ENCODE measurements at regions of chr19 and their contacts with region 1.

Region 1: DNA sequence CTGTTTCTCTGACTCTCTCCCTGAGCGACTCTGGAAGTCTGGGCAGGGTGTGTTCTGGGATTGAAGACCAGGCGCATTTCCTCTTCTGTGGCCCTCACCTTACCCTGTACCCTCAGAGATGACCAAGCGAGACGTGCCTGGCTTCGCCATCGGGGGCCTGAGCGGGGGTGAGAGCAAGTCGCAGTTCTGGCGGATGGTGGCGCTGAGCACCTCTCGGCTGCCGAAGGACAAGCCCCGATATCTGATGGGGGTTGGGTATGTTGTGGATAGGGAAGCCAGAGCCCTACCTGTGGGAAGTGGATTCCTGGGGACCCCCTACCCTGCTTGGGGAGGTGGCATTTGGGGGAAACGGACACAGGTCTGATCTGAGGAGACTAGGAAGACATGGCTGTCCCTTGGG is 5.8 kb upstream of the DNM2 start:
- DNase-seq: no peak
- H3K4me3 ChIP-seq: no peak overlapping the region
- CTCF ChIP-seq: no peak

Region 2: DNA sequence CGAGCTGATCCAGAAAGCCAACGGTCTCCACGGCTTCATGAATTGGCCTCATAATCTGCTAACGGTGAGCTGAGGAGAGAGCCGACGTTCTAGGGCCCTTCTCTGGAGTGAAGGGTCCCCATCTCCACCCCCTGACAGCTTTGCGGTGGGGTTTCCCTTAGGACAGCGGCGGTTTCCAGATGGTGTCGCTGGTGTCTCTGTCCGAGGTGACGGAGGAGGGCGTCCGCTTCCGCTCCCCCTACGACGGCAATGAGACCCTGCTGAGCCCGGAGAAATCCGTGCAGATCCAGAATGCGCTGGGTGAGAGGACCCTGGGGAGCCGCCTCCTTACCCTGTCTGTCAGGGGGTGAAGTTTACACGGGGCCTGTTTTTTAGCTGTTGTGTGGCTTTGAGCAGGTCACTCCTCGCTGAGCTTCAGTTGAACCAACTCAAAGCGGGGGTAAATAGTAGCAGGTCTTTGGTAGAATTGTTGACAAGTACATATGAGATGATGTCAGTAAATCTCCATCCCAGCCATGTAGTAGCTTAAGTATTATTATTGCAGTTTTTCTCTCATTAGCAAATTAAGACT is 10.0 kb before region 1 on chr19:
- CTCF ChIA-PET with region 1: interaction called, 85 read pairs
- POLR2A ChIA-PET with region 1: interaction called, 4 read pairs
- DNase-seq: no peak
- H3K4me3 ChIP-seq: peak overlapping the region; percentile 98
- CTCF ChIP-seq: no peak

Measured in AG04449 (cell line).